CD4-positive, alpha-beta memory T cell (primary cell): ENCODE measurements at regions of chr9 and their contacts with region 1.

Region 1: DNA sequence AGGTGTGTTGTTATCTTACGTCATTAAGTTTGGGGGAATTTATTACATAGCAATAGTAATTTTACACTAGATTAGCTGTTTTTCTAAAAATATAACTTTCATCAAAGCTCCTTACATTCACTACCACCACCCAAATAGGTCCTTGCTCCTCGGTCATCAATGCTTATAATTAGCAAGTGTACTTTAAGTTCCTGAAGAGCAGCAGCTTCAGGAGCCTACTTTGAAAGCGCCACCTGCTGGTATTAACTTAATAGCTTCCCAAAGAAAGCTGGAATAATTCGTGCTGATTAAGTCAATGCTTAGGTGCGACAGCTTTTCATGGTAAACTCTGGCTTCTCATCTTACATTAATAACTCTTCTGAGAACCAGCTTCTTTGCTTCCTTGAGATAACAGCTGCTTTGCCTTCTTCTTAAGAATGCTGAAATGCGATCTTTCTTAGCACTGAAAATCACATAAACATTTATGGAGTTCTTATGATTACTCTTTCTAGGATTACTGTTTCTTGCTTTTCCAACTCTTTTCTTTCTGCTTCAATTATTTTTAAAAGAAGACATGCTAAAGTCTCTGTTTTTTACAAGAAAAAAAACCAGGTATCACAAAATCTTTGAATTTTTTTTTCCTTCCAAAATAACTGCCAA is 10.0 kb upstream of the C5 start:
- DNase-seq: peak in 4 of 5 donors; percentile 48 to 57 (median 50)
- H3K4me3 ChIP-seq: no peak overlapping the region
- H3K4me3 Mint-ChIP-seq: no peak overlapping the region
- H3K27ac ChIP-seq: no peak overlapping the region
- H3K27ac Mint-ChIP-seq: peak overlapping the region in 1 of 7 donors; percentile 20
- H3K4me1 ChIP-seq: peaks cover 27% of the 10 kb centered on the region
- H3K4me1 Mint-ChIP-seq: peaks cover 16 to 18% (median 17%) of the 10 kb centered on the region in 4 donors
- H3K27me3 ChIP-seq: no peaks in the 10 kb centered on the region
- H3K27me3 Mint-ChIP-seq: no peaks in the 10 kb centered on the region

Region 2: DNA sequence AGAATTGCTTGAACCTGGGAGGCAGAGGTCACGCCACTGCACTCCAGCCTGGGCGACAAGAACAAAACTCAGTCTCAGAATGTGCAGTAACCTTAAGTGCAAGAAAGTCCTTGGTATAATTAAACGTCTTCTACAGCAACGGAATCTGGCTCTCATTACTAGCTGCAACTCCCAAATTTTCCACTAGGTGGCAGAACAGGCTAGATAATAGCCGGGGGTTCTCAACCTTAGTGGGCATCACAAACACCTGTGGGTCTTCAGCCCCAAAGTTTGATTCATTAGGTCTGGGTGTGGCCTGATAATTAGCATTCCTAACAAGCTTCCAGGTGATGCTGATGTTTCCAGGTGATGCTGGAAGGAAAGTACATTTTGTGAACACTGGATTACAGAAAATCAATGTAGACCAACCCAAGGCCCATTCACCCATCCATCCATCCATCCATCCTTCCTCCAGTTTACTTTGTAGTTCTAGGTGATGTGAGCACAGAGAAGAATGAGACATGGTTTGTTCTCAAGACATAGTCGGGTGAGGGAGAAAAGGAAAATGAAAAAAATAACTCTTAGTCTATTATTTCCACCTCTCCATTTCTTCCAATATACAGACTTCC is 304.2 kb before region 1 on chr9:
- CTCF ChIA-PET with region 1: interaction called, 211 read pairs
- POLR2A ChIA-PET with region 1: interaction called, 6 read pairs
- intact Hi-C with region 1: loop called (anchors 1 kb)
- DNase-seq: peak; percentile 58 to 75 (median 63)
- H3K4me3 ChIP-seq: no peak overlapping the region
- H3K4me3 Mint-ChIP-seq: no peak overlapping the region
- H3K27ac ChIP-seq: no peak overlapping the region
- H3K27ac Mint-ChIP-seq: peak overlapping the region in 6 of 7 donors; percentile 13 to 79 (median 49)
- H3K4me1 ChIP-seq: no peaks in the 10 kb centered on the region
- H3K4me1 Mint-ChIP-seq: peaks cover 0 to 6% (median 5%) of the 10 kb centered on the region in 4 donors
- H3K27me3 ChIP-seq: no peaks in the 10 kb centered on the region
- H3K27me3 Mint-ChIP-seq: no peaks in the 10 kb centered on the region

Region 3: GRCh38 chr9:120909904-120910303 is 150.2 kb before region 1 on chr9:
- CTCF ChIA-PET with region 1: no interaction called
- POLR2A ChIA-PET with region 1: no interaction called
- intact Hi-C with region 1: no loop called
- DNase-seq: peak in 1 of 5 donors; percentile 90
- H3K4me3 ChIP-seq: no peak overlapping the region
- H3K4me3 Mint-ChIP-seq: peak overlapping the region in 5 of 8 donors; percentile 17 to 55 (median 34)
- H3K27ac ChIP-seq: peak overlapping the region; percentile 70
- H3K27ac Mint-ChIP-seq: peak overlapping the region; percentile 53 to 88 (median 80)
- H3K4me1 ChIP-seq: peaks cover 85% of the 10 kb centered on the region
- H3K4me1 Mint-ChIP-seq: peaks cover 48 to 88% (median 71%) of the 10 kb centered on the region in 4 donors
- H3K27me3 ChIP-seq: no peaks in the 10 kb centered on the region
- H3K27me3 Mint-ChIP-seq: no peaks in the 10 kb centered on the region

Region 4: GRCh38 chr9:120985810-120986222 is 74.3 kb before region 1 on chr9:
- CTCF ChIA-PET with region 1: interaction called, 46 read pairs
- POLR2A ChIA-PET with region 1: no interaction called
- intact Hi-C with region 1: loop called (anchors 1 kb)
- DNase-seq: no peak
- H3K4me3 ChIP-seq: no peak overlapping the region
- H3K4me3 Mint-ChIP-seq: no peak overlapping the region
- H3K27ac ChIP-seq: no peak overlapping the region
- H3K27ac Mint-ChIP-seq: no peak overlapping the region
- H3K4me1 ChIP-seq: no peaks in the 10 kb centered on the region
- H3K4me1 Mint-ChIP-seq: peaks cover 0 to 5% (median 2%) of the 10 kb centered on the region in 4 donors
- H3K27me3 ChIP-seq: no peaks in the 10 kb centered on the region
- H3K27me3 Mint-ChIP-seq: peaks cover 0 to 2% of the 10 kb centered on the region in 2 donors

Region 5: DNA sequence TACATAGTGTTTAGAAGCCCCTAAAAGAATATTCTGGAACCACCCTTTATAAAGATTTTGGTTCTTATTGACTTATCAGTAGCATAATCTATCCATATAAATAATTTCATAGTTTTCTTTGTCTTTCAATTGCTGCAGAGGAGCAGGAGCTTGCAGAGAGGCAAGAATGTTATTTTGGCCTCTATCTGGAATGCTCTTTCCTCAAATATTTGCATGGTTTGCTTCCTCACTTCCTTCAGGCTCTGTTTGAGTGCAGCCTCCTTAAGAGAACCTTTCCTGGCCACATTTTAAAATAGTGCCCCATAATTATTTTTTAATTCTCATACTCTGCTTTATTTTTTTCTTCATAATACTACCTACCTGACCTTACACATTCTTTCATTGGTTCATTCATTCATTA is 11.5 kb before region 1 on chr9:
- CTCF ChIA-PET with region 1: interaction called, 18 read pairs
- POLR2A ChIA-PET with region 1: no interaction called
- intact Hi-C with region 1: no loop called
- DNase-seq: no peak
- H3K4me3 ChIP-seq: no peak overlapping the region
- H3K4me3 Mint-ChIP-seq: no peak overlapping the region
- H3K27ac ChIP-seq: no peak overlapping the region
- H3K27ac Mint-ChIP-seq: no peak overlapping the region
- H3K4me1 ChIP-seq: no peaks in the 10 kb centered on the region
- H3K4me1 Mint-ChIP-seq: no peaks in the 10 kb centered on the region
- H3K27me3 ChIP-seq: no peaks in the 10 kb centered on the region
- H3K27me3 Mint-ChIP-seq: peaks cover 0 to 1% of the 10 kb centered on the region in 2 donors

Region 6: DNA sequence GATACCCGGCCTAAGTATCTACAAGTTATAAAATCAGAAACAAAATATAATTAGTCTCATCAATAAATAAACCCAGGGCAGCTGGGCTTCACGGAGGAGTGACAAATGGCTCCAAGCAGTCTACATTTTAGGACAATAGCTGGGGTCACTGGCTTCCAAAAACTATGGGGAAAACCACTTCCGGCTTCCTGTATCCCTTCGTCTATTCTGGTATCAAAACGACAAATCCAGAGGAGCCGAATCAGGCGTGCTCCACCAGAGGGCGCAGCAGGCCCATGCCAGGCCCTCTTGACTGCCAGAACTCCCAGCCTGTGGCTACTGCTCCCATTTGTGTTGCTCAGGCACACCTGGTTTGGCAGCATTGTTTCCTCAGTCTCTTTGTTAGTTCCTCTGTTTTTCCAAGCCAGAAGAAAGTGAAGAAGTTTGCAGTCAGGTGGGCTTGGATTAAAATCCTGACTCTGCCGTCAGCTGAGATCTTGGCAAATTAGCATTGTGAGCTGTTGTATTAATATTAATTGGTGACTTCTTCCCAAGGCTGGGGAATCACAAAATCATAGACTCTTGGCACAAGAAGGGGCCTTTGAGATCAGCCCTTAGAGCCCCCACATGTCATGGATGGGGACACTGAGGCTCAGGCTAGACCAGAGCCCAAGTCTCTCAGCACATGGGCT is 153.2 kb after region 1 on chr9:
- CTCF ChIA-PET with region 1: no interaction called
- POLR2A ChIA-PET with region 1: no interaction called
- intact Hi-C with region 1: no loop called
- DNase-seq: peak; percentile 40 to 66 (median 49)
- H3K4me3 ChIP-seq: no peak overlapping the region
- H3K4me3 Mint-ChIP-seq: no peak overlapping the region
- H3K27ac ChIP-seq: no peak overlapping the region
- H3K27ac Mint-ChIP-seq: peak overlapping the region in 1 of 7 donors; percentile 47
- H3K4me1 ChIP-seq: peaks cover 5% of the 10 kb centered on the region
- H3K4me1 Mint-ChIP-seq: peaks cover 0 to 7% (median 3%) of the 10 kb centered on the region in 4 donors
- H3K27me3 ChIP-seq: no peaks in the 10 kb centered on the region
- H3K27me3 Mint-ChIP-seq: no peaks in the 10 kb centered on the region